ENCODE measurements at regions of chr14 and their contacts with region 1.

Region 1: DNA sequence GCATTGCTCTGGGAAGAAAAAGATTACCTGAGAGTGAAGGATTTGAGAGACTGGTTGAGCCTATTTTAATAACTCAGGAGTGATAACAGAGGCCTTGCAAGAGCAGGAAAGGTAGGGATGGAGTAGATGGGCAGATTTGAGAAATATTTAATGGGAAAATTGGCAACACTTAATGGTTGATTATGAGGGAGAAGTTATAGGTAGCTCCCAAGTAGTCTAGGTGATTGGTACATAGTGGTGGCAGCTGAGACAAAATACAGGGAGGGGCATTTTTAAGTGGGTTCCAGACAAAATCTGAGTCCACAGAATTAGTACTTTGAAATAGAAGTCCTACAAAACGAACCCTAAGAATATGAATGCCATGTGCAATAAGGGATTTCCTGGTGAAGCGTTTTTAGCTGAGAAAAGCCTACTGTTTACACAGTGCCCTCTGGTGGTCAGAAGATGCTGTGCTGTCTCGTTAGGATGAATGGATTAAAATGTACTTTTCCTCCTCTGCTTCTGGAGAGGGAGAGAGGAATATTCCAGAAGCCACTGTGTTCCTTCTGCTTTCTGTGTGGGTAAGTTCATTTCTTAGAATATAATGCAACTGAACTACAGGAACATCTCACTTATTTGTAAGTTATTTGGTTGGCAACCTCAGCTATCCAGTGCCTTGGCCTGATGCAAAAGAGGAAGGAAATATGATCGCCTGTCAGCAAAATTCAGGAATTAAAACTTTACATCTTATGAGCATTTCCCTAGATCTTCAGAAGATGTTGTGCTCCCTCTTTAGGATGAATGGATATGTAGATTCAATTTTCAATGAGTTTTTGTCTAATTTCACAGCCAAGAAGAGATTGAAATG is 6.5 kb downstream of the ZBTB1 start:
- DNase-seq: peak in 8 of 9 donors; percentile 50 to 73 (median 68)
- ATAC-seq: peak; percentile 87
- H3K4me3 ChIP-seq: no peak overlapping the region
- H3K4me3 Mint-ChIP-seq: peak overlapping the region; percentile 18 to 92 (median 65)
- H3K27ac ChIP-seq: peak overlapping the region; percentile 57
- H3K27ac Mint-ChIP-seq: peak overlapping the region; percentile 64 to 99 (median 91)
- H3K4me1 ChIP-seq: peaks cover 60 to 61% of the 10 kb centered on the region in 2 donors
- H3K4me1 Mint-ChIP-seq: peaks cover 60 to 96% (median 90%) of the 10 kb centered on the region in 7 donors
- H3K27me3 ChIP-seq: no peaks in the 10 kb centered on the region
- H3K27me3 Mint-ChIP-seq: no peaks in the 10 kb centered on the region

Region 2: DNA sequence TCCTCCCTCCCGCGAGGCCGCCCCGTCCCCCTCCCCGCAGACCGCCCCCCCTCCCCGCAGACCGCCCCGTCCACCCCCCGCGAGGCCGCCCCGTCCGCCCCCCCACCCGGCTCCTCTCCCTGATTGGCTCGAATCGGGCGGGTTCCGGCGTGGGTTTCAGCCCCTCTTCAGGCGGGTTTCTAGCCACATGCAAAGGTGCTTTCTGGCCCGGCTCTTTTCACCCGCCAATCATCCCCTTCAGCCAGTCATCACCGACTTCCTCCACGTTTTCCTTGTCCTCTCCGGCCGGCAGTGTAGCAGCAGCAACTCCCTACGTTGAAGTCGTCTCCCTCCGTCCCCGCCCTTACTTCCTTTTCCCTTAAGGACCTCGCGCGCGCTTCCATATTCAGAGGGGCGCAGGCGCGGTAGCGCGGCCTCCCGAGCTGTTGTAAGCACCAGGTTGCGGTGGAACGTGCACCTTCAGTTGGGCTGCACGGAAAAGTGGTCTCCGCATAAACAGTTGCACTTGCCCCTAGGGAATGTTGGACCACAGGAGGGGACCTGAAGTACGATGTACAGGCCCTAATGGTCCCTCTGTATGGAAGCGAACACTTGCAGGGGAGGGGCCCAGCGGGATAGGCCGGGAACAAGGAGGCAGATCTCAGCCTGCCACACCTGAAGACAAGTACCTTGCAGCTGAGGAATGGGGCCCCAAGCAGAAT is 172.3 kb before region 1 on chr14:
- CTCF ChIA-PET with region 1: interaction called, 17 read pairs
- POLR2A ChIA-PET with region 1: interaction called, 5 read pairs
- intact Hi-C with region 1: no loop called
- DNase-seq: peak; percentile 50 to 84 (median 79)
- ATAC-seq: peak; percentile 87
- H3K4me3 ChIP-seq: peak overlapping the region; percentile 57
- H3K4me3 Mint-ChIP-seq: peak overlapping the region; percentile 87 to 99 (median 92)
- H3K27ac ChIP-seq: peak overlapping the region; percentile 72
- H3K27ac Mint-ChIP-seq: peak overlapping the region; percentile 81 to 91 (median 86)
- H3K4me1 ChIP-seq: peaks cover 5 to 10% of the 10 kb centered on the region in 2 donors
- H3K4me1 Mint-ChIP-seq: peaks cover 6 to 36% (median 19%) of the 10 kb centered on the region in 7 donors
- H3K27me3 ChIP-seq: no peaks in the 10 kb centered on the region
- H3K27me3 Mint-ChIP-seq: no peaks in the 10 kb centered on the region

Region 3: GRCh38 chr14:64434528-64434927 is 76.5 kb before region 1 on chr14:
- CTCF ChIA-PET with region 1: interaction called, 40 read pairs
- POLR2A ChIA-PET with region 1: interaction called, 7 read pairs
- intact Hi-C with region 1: loop called (anchors 1 kb)
- DNase-seq: no peak
- ATAC-seq: no peak
- H3K4me3 ChIP-seq: no peak overlapping the region
- H3K4me3 Mint-ChIP-seq: no peak overlapping the region
- H3K27ac ChIP-seq: no peak overlapping the region
- H3K27ac Mint-ChIP-seq: no peak overlapping the region
- H3K4me1 ChIP-seq: no peaks in the 10 kb centered on the region
- H3K4me1 Mint-ChIP-seq: peaks cover 0 to 18% (median 0%) of the 10 kb centered on the region in 7 donors
- H3K27me3 ChIP-seq: no peaks in the 10 kb centered on the region
- H3K27me3 Mint-ChIP-seq: no peaks in the 10 kb centered on the region

Region 4: GRCh38 chr14:64478634-64479250 is 32.3 kb before region 1 on chr14:
- CTCF ChIA-PET with region 1: interaction called, 33 read pairs
- POLR2A ChIA-PET with region 1: interaction called, 157 read pairs
- intact Hi-C with region 1: loop called in 1 of 2 experiments (anchors 1 kb)
- DNase-seq: peak in 5 of 9 donors; percentile 18 to 38 (median 32)
- ATAC-seq: peak; percentile 51
- H3K4me3 ChIP-seq: no peak overlapping the region
- H3K4me3 Mint-ChIP-seq: no peak overlapping the region
- H3K27ac ChIP-seq: no peak overlapping the region
- H3K27ac Mint-ChIP-seq: peak overlapping the region in 1 of 9 donors; percentile 55
- H3K4me1 ChIP-seq: no peaks in the 10 kb centered on the region
- H3K4me1 Mint-ChIP-seq: peaks cover 0 to 22% (median 9%) of the 10 kb centered on the region in 7 donors
- H3K27me3 ChIP-seq: no peaks in the 10 kb centered on the region
- H3K27me3 Mint-ChIP-seq: no peaks in the 10 kb centered on the region

Region 5: DNA sequence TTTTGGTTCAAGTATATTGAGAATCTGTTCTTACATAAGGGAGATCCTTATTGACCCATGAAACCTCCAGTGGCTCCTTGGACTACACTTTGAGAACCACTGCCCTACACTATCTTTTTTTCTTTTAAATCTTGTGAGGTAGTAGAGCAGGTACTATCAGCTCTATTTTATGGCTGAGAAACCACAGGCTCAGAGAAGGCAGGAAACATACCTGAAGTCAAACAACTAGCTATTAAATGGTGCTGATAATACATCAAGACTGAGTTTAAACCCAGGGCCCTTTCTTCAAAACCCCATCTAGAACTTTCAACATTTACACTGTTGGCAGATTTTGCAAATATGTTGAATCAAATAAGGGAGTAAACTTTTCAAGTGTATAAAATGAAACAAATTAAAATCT is 14.3 kb before region 1 on chr14:
- CTCF ChIA-PET with region 1: interaction called, 8 read pairs
- POLR2A ChIA-PET with region 1: interaction called, 157 read pairs
- intact Hi-C with region 1: loop called in 1 of 2 experiments (anchors 1 kb)
- DNase-seq: peak in 1 of 9 donors; percentile 17
- ATAC-seq: no peak
- H3K4me3 ChIP-seq: no peak overlapping the region
- H3K4me3 Mint-ChIP-seq: peak overlapping the region in 8 of 10 donors; percentile 37 to 77 (median 66)
- H3K27ac ChIP-seq: peak overlapping the region; percentile 4
- H3K27ac Mint-ChIP-seq: peak overlapping the region in 8 of 9 donors; percentile 43 to 86 (median 77)
- H3K4me1 ChIP-seq: peaks cover 31 to 57% of the 10 kb centered on the region in 2 donors
- H3K4me1 Mint-ChIP-seq: peaks cover 59 to 88% (median 71%) of the 10 kb centered on the region in 7 donors
- H3K27me3 ChIP-seq: no peaks in the 10 kb centered on the region
- H3K27me3 Mint-ChIP-seq: no peaks in the 10 kb centered on the region

Region 6: DNA sequence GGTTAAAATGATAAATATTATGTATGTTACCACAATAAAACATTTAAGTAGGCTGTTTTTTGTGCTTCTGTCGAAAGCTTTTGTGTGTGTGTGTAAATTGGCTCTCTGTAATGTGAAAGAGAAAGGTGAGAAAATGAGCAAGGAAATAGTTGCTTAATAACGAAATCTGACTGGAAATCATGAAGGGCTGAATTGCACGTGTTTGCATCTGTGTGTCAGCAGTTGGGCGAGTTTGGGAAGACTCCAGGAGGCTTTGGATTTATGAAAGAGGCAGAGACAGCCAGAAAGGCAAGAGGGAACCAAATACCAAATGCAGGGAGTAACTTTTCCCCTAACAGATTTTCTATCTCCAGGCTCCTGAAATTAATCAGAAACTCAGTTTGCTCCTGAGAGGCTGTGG is 145.9 kb after region 1 on chr14:
- CTCF ChIA-PET with region 1: no interaction called
- POLR2A ChIA-PET with region 1: no interaction called
- intact Hi-C with region 1: no loop called
- DNase-seq: no peak
- ATAC-seq: no peak
- H3K4me3 ChIP-seq: no peak overlapping the region
- H3K4me3 Mint-ChIP-seq: peak overlapping the region in 2 of 10 donors; percentile 7 to 9
- H3K27ac ChIP-seq: no peak overlapping the region
- H3K27ac Mint-ChIP-seq: no peak overlapping the region
- H3K4me1 ChIP-seq: no peaks in the 10 kb centered on the region
- H3K4me1 Mint-ChIP-seq: peaks cover 0 to 24% (median 10%) of the 10 kb centered on the region in 7 donors
- H3K27me3 ChIP-seq: no peaks in the 10 kb centered on the region
- H3K27me3 Mint-ChIP-seq: peaks cover 11 to 35% (median 24%) of the 10 kb centered on the region in 5 donors

Region 7: DNA sequence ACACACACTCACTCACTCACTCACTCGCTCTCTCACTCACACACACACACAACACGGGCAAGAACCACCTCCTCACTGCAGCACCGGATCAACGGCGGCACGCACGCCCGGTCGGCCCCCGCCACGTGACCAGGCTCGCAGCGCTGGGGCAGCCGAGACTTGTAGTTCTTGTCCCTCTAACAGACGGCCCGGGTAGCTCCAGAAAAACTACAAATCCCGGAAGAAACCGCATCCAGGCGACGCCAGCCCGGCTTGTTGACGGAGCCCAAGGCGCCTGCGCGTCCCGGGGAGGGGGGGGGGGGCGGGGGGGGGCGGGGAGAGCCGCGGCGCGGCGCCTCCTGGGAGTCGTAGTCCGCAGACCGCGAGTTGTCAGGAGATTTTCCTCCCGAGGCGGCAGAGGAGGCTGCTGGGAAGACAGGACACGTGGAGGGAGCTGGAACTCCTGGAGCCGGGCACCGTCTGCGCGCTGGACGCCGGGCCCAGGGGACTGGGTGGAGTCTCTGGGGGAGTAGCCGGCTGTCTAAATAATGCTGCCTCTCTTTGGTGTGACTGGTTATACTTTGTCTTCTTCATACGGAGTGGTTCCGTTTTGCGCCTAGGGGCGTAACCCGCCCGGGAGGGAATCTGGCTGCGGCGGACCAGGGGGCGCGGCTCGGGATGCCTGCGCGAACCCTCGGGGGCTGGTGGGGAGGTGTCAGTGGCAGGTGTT is 591.5 kb after region 1 on chr14 and contains the start of gene MAX:
- CTCF ChIA-PET with region 1: no interaction called
- POLR2A ChIA-PET with region 1: no interaction called
- intact Hi-C with region 1: no loop called
- DNase-seq: peak; percentile 88 to 100 (median 99)
- ATAC-seq: peak; percentile 95
- H3K4me3 ChIP-seq: peak within 1 kb of the TSS; percentile 96
- H3K4me3 Mint-ChIP-seq: peak within 1 kb of the TSS; percentile 87 to 97 (median 91)
- H3K27ac ChIP-seq: peak within 1 kb of the TSS; percentile 100
- H3K27ac Mint-ChIP-seq: peak within 1 kb of the TSS; percentile 91 to 99 (median 94)
- H3K4me1 ChIP-seq: peaks cover 17 to 34% of the 10 kb centered on the region in 2 donors
- H3K4me1 Mint-ChIP-seq: peaks cover 28 to 43% (median 42%) of the 10 kb centered on the region in 7 donors
- H3K27me3 ChIP-seq: no peaks in the 10 kb centered on the region
- H3K27me3 Mint-ChIP-seq: peaks cover 0 to 12% (median 0%) of the 10 kb centered on the region in 5 donors
- total RNA-seq, gene MAX: 164 to 236 (median 202) TPM